CD8-positive, alpha-beta T cell (primary cell): ENCODE measurements at regions of chr14 and their contacts with region 1.

Region 1: DNA sequence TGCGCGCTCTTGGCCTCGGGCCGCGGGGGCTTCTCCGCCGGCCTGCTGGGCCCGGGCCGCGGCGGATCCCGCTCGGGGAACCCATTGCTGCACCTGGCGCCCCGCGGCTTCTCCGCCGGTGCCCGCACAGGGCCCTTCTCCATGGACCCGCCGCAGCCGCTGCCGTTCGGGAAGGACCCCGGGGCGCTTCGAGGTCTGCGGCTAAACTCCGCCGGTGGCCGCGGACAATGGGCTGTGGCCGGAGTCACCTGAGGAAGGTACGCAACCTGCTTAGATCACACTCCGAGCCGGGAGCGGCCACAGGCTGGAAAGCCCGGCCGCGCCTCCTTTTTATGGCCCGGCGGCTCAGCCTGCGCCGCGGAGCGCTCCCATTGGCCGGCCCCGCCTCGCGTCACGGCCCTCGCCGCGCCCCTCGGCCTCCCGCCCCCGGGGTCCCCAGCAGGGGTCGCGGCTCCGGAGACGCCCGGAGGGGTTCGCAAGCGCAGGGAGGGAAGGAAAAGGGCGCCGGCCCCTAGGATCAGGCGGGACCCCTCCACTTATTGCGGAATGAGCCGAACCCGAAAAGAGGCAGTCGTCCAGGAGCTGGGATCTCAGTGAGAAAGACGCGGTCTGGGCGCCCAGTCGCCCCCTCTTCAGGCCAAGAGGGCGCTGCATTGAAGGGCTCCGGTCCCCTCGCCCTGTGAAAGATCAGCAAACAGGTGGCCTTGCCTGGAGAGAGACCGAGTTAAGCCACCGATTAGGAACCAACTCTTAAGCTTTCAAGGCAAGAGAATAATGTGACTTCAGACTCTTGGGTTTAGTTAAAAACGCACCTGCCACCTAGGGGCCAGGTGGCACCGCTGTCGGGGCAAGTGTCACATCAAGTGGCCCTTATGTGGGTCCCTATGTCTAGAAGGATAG is at the start of gene GCH1:
- DNase-seq: peak; percentile 51 to 91 (median 73)
- ATAC-seq: peak; percentile 73
- H3K4me3 ChIP-seq: peak within 1 kb of the TSS; percentile 95 to 98
- H3K4me3 Mint-ChIP-seq: peak within 1 kb of the TSS; percentile 92
- H3K27ac ChIP-seq: peak within 1 kb of the TSS; percentile 79 to 89
- H3K27ac Mint-ChIP-seq: peak within 1 kb of the TSS; percentile 91
- H3K4me1 ChIP-seq: peaks cover 11% of the 10 kb centered on the region
- H3K4me1 Mint-ChIP-seq: peaks cover 27% of the 10 kb centered on the region
- H3K27me3 ChIP-seq: no peaks in the 10 kb centered on the region
- H3K27me3 Mint-ChIP-seq: no peaks in the 10 kb centered on the region
- CTCF ChIP-seq: peak; percentile 61
- total RNA-seq, gene GCH1: 30.0 to 30.5 TPM

Region 2: GRCh38 chr14:54278087-54278486 is 624.7 kb before region 1 on chr14:
- CTCF ChIA-PET with region 1: no interaction called
- POLR2A ChIA-PET with region 1: no interaction called
- intact Hi-C with region 1: no loop called
- DNase-seq: no peak
- ATAC-seq: no peak
- H3K4me3 ChIP-seq: no peak overlapping the region
- H3K4me3 Mint-ChIP-seq: no peak overlapping the region
- H3K27ac ChIP-seq: no peak overlapping the region
- H3K27ac Mint-ChIP-seq: no peak overlapping the region
- H3K4me1 ChIP-seq: no peaks in the 10 kb centered on the region
- H3K4me1 Mint-ChIP-seq: no peaks in the 10 kb centered on the region
- H3K27me3 ChIP-seq: peaks cover 0 to 3% of the 10 kb centered on the region in 2 experiments
- H3K27me3 Mint-ChIP-seq: peaks cover 4% of the 10 kb centered on the region
- CTCF ChIP-seq: no peak

Region 3: GRCh38 chr14:54440873-54441868 is 461.6 kb before region 1 on chr14 and contains the start of gene CNIH1:
- CTCF ChIA-PET with region 1: no interaction called
- POLR2A ChIA-PET with region 1: no interaction called
- intact Hi-C with region 1: loop called (anchors 2 to 5 kb)
- DNase-seq: peak; percentile 88 to 98 (median 93)
- ATAC-seq: peak; percentile 92
- H3K4me3 ChIP-seq: peak within 1 kb of the TSS; percentile 45 to 66
- H3K4me3 Mint-ChIP-seq: peak within 1 kb of the TSS; percentile 93
- H3K27ac ChIP-seq: peak within 1 kb of the TSS; percentile 76 to 81
- H3K27ac Mint-ChIP-seq: peak within 1 kb of the TSS; percentile 96
- H3K4me1 ChIP-seq: peaks cover 18% of the 10 kb centered on the region
- H3K4me1 Mint-ChIP-seq: peaks cover 41% of the 10 kb centered on the region
- H3K27me3 ChIP-seq: no peaks in the 10 kb centered on the region
- H3K27me3 Mint-ChIP-seq: no peaks in the 10 kb centered on the region
- CTCF ChIP-seq: peak; percentile 99
- total RNA-seq, gene CNIH1: 49.2 to 55.6 TPM

Region 4: GRCh38 chr14:54509546-54510501 is 392.9 kb before region 1 on chr14 and contains the start of gene CGRRF1:
- CTCF ChIA-PET with region 1: no interaction called
- POLR2A ChIA-PET with region 1: no interaction called
- intact Hi-C with region 1: loop called in 1 of 2 experiments (anchors 1 kb)
- DNase-seq: peak; percentile 90 to 98 (median 96)
- ATAC-seq: peak; percentile 95
- H3K4me3 ChIP-seq: peak within 1 kb of the TSS; percentile 92 to 99
- H3K4me3 Mint-ChIP-seq: peak within 1 kb of the TSS; percentile 96
- H3K27ac ChIP-seq: peak within 1 kb of the TSS; percentile 73 to 92
- H3K27ac Mint-ChIP-seq: peak within 1 kb of the TSS; percentile 92
- H3K4me1 ChIP-seq: peaks cover 31% of the 10 kb centered on the region
- H3K4me1 Mint-ChIP-seq: peaks cover 51% of the 10 kb centered on the region
- H3K27me3 ChIP-seq: no peaks in the 10 kb centered on the region
- H3K27me3 Mint-ChIP-seq: peaks cover 4% of the 10 kb centered on the region
- CTCF ChIP-seq: peak; percentile 64
- total RNA-seq, gene CGRRF1: 59.6 to 59.9 TPM

Region 5: GRCh38 chr14:54881235-54881760 is 21.5 kb before region 1 on chr14:
- CTCF ChIA-PET with region 1: interaction called, 17 read pairs
- POLR2A ChIA-PET with region 1: interaction called, 29 read pairs
- intact Hi-C with region 1: loop called in 1 of 2 experiments (anchors 1 kb)
- DNase-seq: peak in 6 of 9 experiments; percentile 15 to 68 (median 42)
- ATAC-seq: peak; percentile 69
- H3K4me3 ChIP-seq: peak overlapping the region; percentile 46 to 56
- H3K4me3 Mint-ChIP-seq: peak overlapping the region; percentile 86
- H3K27ac ChIP-seq: peak overlapping the region; percentile 62 to 85
- H3K27ac Mint-ChIP-seq: peak overlapping the region; percentile 91
- H3K4me1 ChIP-seq: peaks cover 11% of the 10 kb centered on the region
- H3K4me1 Mint-ChIP-seq: peaks cover 44% of the 10 kb centered on the region
- H3K27me3 ChIP-seq: no peaks in the 10 kb centered on the region
- H3K27me3 Mint-ChIP-seq: no peaks in the 10 kb centered on the region
- CTCF ChIP-seq: no peak

Region 6: GRCh38 chr14:54981698-54982097 is 78.9 kb after region 1 on chr14:
- CTCF ChIA-PET with region 1: no interaction called
- POLR2A ChIA-PET with region 1: no interaction called
- intact Hi-C with region 1: no loop called
- DNase-seq: peak in 1 of 9 experiments; percentile 5
- ATAC-seq: no peak
- H3K4me3 ChIP-seq: no peak overlapping the region
- H3K4me3 Mint-ChIP-seq: no peak overlapping the region
- H3K27ac ChIP-seq: no peak overlapping the region
- H3K27ac Mint-ChIP-seq: no peak overlapping the region
- H3K4me1 ChIP-seq: no peaks in the 10 kb centered on the region
- H3K4me1 Mint-ChIP-seq: no peaks in the 10 kb centered on the region
- H3K27me3 ChIP-seq: no peaks in the 10 kb centered on the region
- H3K27me3 Mint-ChIP-seq: no peaks in the 10 kb centered on the region
- CTCF ChIP-seq: peak; percentile 30

Region 7: DNA sequence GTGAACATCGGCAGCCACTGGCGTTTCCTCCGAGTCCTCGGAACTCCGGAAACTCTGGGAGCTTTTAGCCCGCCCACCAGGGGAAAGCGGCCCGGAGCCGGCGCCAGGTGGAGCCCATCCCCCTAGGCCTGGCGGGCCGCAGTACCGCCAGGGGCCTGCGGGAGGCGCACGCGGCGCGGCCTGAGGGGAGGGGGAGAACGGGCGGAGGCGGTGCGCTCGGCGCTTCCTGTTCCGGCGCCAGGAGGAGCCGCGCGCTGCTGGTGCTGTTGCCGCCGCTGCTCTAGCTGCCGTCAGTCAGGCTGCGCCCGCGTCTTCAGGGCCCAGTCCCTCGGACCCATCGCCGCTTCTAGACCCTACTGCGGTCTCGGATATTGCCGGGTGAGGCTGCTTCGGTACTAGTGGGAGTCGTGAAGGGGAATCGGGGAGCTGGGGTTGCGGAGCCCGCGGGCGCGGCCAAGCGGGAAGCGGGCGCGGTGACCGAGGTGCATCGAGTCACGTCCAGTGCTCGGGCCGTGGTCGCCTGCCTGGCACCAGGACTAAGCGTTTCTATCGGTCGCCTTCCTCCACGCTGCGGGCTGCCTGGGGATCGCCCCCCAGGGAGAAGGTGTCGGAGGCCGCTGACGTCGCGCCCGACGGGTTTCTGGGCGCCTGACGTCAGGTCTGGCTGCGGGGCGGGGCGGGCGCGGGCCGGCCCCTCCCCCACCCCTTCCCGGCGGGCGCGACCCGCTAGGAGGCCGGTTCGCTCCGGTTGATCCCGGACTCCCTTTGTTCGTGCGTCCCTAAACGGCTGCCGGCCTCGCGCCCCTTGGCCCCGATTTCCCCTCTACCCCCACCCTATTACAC is 148.9 kb after region 1 on chr14 and contains the start of gene MAPK1IP1L:
- CTCF ChIA-PET with region 1: no interaction called
- POLR2A ChIA-PET with region 1: interaction called, 3 read pairs
- intact Hi-C with region 1: loop called in 1 of 2 experiments (anchors 1 kb)
- DNase-seq: peak; percentile 83 to 94 (median 89)
- ATAC-seq: peak; percentile 94
- H3K4me3 ChIP-seq: peak within 1 kb of the TSS; percentile 99 to 100
- H3K4me3 Mint-ChIP-seq: peak within 1 kb of the TSS; percentile 88
- H3K27ac ChIP-seq: peak within 1 kb of the TSS; percentile 100
- H3K27ac Mint-ChIP-seq: peak within 1 kb of the TSS; percentile 94
- H3K4me1 ChIP-seq: peaks cover 27% of the 10 kb centered on the region
- H3K4me1 Mint-ChIP-seq: peaks cover 47% of the 10 kb centered on the region
- H3K27me3 ChIP-seq: no peaks in the 10 kb centered on the region
- H3K27me3 Mint-ChIP-seq: no peaks in the 10 kb centered on the region
- CTCF ChIP-seq: peak; percentile 100
- total RNA-seq, gene MAPK1IP1L: 207 to 212 TPM

Region 8: GRCh38 chr14:56117765-56118610 is 1215.2 kb after region 1 on chr14 and contains the start of gene PELI2:
- CTCF ChIA-PET with region 1: no interaction called
- POLR2A ChIA-PET with region 1: no interaction called
- intact Hi-C with region 1: loop called in 1 of 2 experiments (anchors 5 kb)
- DNase-seq: peak; percentile 66 to 94 (median 82)
- ATAC-seq: peak; percentile 86
- H3K4me3 ChIP-seq: peak within 1 kb of the TSS; percentile 73 to 74
- H3K4me3 Mint-ChIP-seq: peak within 1 kb of the TSS; percentile 95
- H3K27ac ChIP-seq: peak within 1 kb of the TSS; percentile 67 to 92
- H3K27ac Mint-ChIP-seq: peak within 1 kb of the TSS; percentile 99
- H3K4me1 ChIP-seq: peaks cover 34% of the 10 kb centered on the region
- H3K4me1 Mint-ChIP-seq: peaks cover 49% of the 10 kb centered on the region
- H3K27me3 ChIP-seq: no peaks in the 10 kb centered on the region
- H3K27me3 Mint-ChIP-seq: peaks cover 4% of the 10 kb centered on the region
- CTCF ChIP-seq: no peak
- total RNA-seq, gene PELI2: 13.3 to 15.1 TPM